ENCODE measurements at regions of chr17 and their contacts with region 1.

Region 1: DNA sequence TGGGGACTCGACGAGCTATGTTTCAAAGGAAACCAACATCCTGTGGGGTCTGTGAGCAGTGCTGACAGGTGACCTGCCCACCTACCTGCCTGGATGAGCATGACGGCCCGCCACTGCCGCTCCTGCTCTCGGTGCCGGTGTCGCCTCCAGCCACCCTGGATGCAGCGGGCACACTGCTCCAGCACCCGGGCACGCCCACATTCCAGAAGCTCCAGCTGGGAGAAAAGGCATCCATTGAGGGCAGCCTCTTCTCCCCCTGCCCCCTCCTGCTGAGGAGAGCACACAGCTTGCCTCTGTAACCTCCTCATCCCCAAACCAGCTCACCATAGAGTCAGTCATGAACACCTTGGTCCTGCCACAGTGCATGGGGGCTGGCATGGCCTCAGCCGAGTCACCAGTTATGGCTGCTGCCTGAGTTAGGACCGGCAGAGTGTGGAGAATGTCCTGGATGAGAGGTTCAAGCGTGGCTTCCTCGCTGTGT is 14.3 kb downstream of the ZNHIT3 start:
- DNase-seq: no peak
- ATAC-seq: no peak
- H3K4me3 ChIP-seq: no peak overlapping the region
- H3K27ac ChIP-seq: no peak overlapping the region
- H3K4me1 ChIP-seq: no peaks in the 10 kb centered on the region
- H3K27me3 ChIP-seq: no peaks in the 10 kb centered on the region
- CTCF ChIP-seq: no peak

Region 2: DNA sequence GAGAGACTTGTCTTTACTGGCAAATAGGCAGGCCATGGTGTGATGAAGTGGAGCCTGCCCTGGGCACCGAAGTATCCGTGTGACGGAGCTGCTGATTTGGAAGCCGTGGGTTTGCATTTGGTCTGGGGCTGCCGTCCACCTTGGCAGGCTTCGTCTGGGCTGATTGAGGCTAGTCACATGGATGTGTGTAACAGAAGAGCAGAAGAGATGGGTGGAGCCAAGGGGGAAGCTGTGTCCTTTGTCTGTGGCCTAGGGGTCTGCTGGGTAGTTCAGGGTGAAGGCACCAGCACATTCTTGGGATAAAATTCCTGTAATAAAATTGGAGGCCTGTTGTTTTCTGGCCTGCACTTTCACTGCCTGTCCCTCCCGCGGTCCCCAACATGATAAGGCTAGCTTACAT is 554.1 kb after region 1 on chr17:
- intact Hi-C with region 1: loop called in 1 of 3 experiments (anchors 5 kb)
- DNase-seq: no peak
- ATAC-seq: no peak
- H3K4me3 ChIP-seq: no peak overlapping the region
- H3K27ac ChIP-seq: no peak overlapping the region
- H3K4me1 ChIP-seq: no peaks in the 10 kb centered on the region
- H3K27me3 ChIP-seq: no peaks in the 10 kb centered on the region
- CTCF ChIP-seq: no peak

Measured in pancreas (tissue), 10 donors.